Calu3 (cell line): ENCODE measurements at regions of chr11 and their contacts with region 1.

Region 1: GRCh38 chr11:75497788-75498409 is 27.8 kb downstream of the GDPD5 start:
- DNase-seq: no peak
- H3K4me3 Mint-ChIP-seq: no peak overlapping the region
- H3K27ac Mint-ChIP-seq: no peak overlapping the region
- H3K4me1 Mint-ChIP-seq: no peaks in the 10 kb centered on the region
- H3K27me3 Mint-ChIP-seq: peaks cover 32% of the 10 kb centered on the region
- CTCF ChIP-seq: no peak

Region 2: DNA sequence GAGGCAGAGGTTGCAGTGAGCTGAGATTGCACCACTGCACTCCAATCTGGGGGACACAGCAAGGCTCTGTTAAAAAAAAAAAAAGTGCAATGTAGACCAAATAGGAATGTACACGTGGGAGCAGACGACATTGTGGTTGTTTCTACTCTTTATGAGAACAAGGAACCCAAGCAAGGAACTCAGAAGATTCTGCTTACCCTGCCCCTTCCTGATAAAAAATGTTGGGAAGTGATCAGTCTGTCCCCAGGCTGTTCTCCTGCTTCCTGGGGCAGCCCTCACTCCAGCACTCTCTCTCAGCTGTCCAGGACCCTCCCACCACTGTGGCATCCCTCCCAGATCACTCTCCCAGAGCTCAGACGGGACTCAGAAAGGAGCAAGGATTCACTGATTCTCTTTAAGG is 315.2 kb before region 1 on chr11:
- CTCF ChIA-PET with region 1: no interaction called
- intact Hi-C with region 1: no loop called
- DNase-seq: no peak
- H3K4me3 Mint-ChIP-seq: no peak overlapping the region
- H3K27ac Mint-ChIP-seq: no peak overlapping the region
- H3K4me1 Mint-ChIP-seq: no peaks in the 10 kb centered on the region
- H3K27me3 Mint-ChIP-seq: peaks cover 41% of the 10 kb centered on the region
- CTCF ChIP-seq: no peak

Region 3: DNA sequence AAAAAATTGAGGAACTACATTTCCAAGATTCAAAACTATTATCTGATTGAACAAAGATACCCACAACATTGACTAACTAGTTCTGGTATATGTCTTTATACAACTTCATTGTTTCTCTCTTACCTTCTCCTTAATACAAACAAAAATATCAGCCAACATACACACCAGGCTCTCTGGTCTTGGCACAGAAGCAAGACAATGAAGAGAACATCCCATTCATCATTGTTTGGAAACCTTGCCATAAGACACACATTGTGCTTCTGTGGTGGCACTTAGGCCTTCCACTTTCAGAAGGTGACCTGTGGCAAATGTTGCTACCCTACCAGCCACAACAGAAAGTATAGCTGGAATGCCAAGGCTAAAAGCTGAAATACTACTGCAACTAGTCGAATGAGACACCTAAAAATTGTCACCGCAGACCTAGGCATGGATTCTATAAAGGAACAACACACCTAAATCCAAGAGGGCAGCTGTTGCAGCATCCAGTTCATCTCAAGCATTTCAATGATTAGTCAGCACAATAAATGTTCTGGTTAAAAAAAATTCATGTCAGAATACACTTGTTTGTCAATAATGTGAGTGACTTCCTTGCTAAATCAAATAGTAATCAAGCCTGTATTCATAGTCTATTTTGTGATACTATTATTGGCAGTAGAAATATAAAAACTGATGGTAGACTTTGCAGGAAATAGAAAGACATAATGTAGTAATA is 144.7 kb after region 1 on chr11:
- CTCF ChIA-PET with region 1: no interaction called
- intact Hi-C with region 1: no loop called
- DNase-seq: no peak
- H3K4me3 Mint-ChIP-seq: no peak overlapping the region
- H3K27ac Mint-ChIP-seq: no peak overlapping the region
- H3K4me1 Mint-ChIP-seq: no peaks in the 10 kb centered on the region
- H3K27me3 Mint-ChIP-seq: peaks cover 64% of the 10 kb centered on the region
- CTCF ChIP-seq: no peak

Region 4: GRCh38 chr11:75700940-75701339 is 203.0 kb after region 1 on chr11:
- CTCF ChIA-PET with region 1: interaction called, 12 read pairs
- intact Hi-C with region 1: no loop called
- DNase-seq: no peak
- H3K4me3 Mint-ChIP-seq: no peak overlapping the region
- H3K27ac Mint-ChIP-seq: no peak overlapping the region
- H3K4me1 Mint-ChIP-seq: peaks cover 22% of the 10 kb centered on the region
- H3K27me3 Mint-ChIP-seq: peaks cover 32% of the 10 kb centered on the region
- CTCF ChIP-seq: no peak